ENCODE measurements at regions of chr6 and their contacts with region 1.

Region 1: DNA sequence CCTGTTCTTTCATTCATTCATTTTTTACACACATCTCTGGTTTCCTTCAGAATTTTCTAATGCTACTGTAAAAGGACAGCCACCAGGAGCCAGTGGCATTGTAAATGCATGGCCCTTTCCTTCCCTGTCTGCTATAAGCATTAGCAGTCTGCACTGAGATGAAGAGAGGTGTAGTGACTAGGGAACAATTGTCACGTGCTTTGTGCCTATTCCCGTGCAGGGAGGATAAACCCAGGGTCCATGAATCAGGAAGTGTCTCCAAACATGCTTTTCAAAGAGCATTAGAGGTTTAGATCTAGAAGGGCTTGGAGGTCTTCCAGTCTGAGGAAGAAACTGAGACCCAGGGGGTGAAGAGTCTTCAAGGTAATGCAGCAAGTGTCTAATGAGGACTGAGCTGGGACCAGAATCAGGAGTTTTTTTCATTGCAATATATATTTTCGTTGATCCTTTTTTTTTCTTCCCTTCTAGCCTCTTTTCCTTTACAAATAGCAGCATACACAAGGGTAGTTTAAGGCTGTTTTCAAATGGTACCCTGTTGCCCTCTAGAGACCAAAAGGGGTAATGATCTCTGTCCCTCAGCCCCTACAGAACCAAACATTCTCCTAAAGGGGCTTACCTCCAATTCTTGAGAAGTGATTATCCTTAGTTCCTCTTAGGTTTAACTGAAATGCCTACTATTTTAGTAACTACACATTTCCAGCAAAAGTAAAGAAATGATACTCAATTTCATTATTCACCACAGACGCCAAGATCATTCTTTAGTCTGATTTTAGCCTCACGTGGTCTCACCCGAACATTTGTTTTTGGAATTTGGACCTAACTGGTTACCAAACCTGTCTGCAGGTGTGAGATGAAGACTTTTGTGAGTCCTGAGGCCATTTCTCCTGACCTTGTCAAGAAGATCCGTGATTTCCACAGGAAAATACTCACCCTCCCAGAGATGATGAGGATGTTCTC is 6.6 kb downstream of the TRIM15 start:
- DNase-seq: no peak
- ATAC-seq: peak in 1 of 2 donors; percentile 79

Region 2: DNA sequence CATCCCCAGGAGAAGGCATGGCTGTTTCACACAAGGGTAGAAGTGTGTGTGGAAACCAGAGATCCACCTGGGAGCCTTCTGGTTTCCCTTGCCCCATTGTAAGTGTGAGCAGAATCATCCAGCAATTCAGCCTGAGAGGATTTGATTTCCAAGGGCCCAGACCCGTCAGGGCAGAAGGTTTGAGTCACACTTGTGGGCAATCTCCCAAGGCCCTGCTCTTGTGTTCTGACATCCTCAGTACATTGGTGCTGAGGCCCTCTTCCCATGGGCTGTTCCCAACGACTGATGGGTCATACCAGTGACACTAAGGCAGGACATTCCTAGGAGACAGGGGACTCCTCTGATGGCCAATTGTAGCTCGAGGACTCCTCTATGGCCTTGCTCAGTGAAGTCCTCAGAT is 167.1 kb before region 1 on chr6:
- intact Hi-C with region 1: no loop called
- DNase-seq: no peak
- ATAC-seq: no peak

Region 3: DNA sequence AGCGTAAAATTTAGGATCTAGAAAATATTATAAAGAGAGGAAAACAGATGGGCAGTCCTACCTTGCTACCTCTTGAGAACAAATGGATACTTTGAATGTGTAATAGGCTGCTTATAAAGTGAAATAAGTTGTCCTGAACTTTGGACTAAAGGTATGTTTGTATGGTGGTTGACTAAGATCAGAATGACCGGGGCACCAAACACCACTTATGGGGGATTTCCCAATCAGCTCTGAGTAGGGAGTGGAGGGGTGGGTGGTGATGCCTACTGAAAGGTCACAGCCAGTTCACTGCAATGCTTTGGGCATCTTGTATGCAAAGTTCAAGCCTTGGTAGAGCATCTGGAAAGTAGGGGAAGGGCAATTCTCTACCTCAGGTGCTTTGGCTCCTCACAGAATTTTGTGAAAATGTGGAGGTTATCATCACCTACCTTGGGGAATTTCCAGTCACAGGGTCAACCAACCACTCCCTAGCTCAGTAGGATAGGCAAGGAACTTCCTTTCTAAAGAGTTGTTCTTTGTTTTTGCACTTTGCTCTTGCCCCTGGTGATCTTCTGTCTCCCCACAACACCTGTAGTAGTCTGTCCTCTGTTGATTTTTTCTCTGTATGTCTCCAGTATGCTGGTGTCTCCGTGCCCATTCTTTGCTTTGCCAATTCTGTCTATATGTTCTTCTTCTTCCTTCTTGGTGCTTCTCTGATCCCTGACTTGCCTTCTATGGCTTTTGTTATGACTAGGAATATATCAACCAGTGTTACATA is 56.8 kb before region 1 on chr6 and contains the start of gene TRIM31:
- intact Hi-C with region 1: loop called in 1 of 2 experiments (anchors 10 kb)
- DNase-seq: no peak
- ATAC-seq: no peak
- total RNA-seq, gene TRIM31: not detected